ENCODE measurements at regions of chr1 and their contacts with region 1.

Region 1: DNA sequence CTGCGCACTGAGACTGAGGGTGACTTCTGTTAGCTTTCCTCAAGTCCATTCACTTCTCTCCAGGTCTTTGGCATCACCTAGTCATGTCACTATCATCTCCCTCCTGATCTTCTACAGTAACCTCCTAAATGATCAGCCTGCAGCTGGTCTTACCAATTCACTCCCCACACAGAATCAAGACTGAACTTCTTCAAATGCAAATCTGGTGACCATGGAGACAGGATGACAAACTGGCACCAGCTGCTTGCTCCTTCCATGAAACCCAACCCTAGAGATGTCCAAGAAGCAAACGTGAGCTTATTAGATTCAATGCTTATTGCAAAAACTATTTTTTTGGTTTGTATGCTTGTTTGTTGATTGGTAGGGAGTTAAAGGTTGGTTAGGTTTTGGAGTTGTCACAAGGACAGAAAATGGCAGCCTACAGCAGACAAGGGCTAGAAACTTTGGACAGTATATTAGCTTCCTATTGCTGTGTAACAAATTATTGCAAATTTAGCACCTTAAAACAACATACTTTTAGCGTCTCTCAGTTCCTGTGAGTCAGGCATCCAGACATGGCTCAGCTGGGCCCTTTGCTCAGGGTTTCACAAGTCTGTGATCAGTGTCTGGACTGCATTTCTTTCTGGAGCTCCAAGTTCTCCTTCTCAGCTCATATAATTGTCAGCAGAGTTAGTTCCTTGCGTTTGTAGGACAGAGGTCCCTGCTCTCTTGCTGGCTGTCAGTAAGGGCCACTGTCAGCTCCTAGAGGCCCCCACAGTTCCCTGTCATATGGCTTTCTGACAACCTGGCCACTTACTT is 53.3 kb upstream of the GJA8 start:
- DNase-seq: no peak
- ATAC-seq: no peak
- H3K4me3 ChIP-seq: no peak overlapping the region
- H3K4me3 Mint-ChIP-seq: no peak overlapping the region
- H3K27ac ChIP-seq: no peak overlapping the region
- H3K27ac Mint-ChIP-seq: no peak overlapping the region
- H3K4me1 ChIP-seq: no peaks in the 10 kb centered on the region
- H3K4me1 Mint-ChIP-seq: no peaks in the 10 kb centered on the region
- H3K27me3 ChIP-seq: peaks cover 0 to 8% of the 10 kb centered on the region in 2 experiments
- H3K27me3 Mint-ChIP-seq: peaks cover 20% of the 10 kb centered on the region
- CTCF ChIP-seq: no peak

Region 2: GRCh38 chr1:147762233-147763024 is 86.9 kb before region 1 on chr1:
- CTCF ChIA-PET with region 1: no interaction called
- POLR2A ChIA-PET with region 1: no interaction called
- intact Hi-C with region 1: no loop called
- DNase-seq: peak in 4 of 14 experiments; percentile 22 to 63 (median 26)
- ATAC-seq: peak; percentile 32
- H3K4me3 ChIP-seq: no peak overlapping the region
- H3K4me3 Mint-ChIP-seq: peak overlapping the region; percentile 65
- H3K27ac ChIP-seq: peak overlapping the region; percentile 8 to 65
- H3K27ac Mint-ChIP-seq: peak overlapping the region; percentile 83
- H3K4me1 ChIP-seq: peaks cover 30% of the 10 kb centered on the region
- H3K4me1 Mint-ChIP-seq: peaks cover 31% of the 10 kb centered on the region
- H3K27me3 ChIP-seq: no peaks in the 10 kb centered on the region
- H3K27me3 Mint-ChIP-seq: no peaks in the 10 kb centered on the region
- CTCF ChIP-seq: no peak

Region 3: GRCh38 chr1:147798731-147799130 is 50.6 kb before region 1 on chr1:
- CTCF ChIA-PET with region 1: no interaction called
- POLR2A ChIA-PET with region 1: no interaction called
- intact Hi-C with region 1: loop called in 1 of 2 experiments (anchors 5 kb)
- DNase-seq: no peak
- ATAC-seq: no peak
- H3K4me3 ChIP-seq: no peak overlapping the region
- H3K4me3 Mint-ChIP-seq: no peak overlapping the region
- H3K27ac ChIP-seq: no peak overlapping the region
- H3K27ac Mint-ChIP-seq: no peak overlapping the region
- H3K4me1 ChIP-seq: no peaks in the 10 kb centered on the region
- H3K4me1 Mint-ChIP-seq: no peaks in the 10 kb centered on the region
- H3K27me3 ChIP-seq: peaks cover 0 to 2% of the 10 kb centered on the region in 2 experiments
- H3K27me3 Mint-ChIP-seq: peaks cover 16% of the 10 kb centered on the region
- CTCF ChIP-seq: no peak